ENCODE measurements at regions of chr16 and their contacts with region 1.

Region 1: DNA sequence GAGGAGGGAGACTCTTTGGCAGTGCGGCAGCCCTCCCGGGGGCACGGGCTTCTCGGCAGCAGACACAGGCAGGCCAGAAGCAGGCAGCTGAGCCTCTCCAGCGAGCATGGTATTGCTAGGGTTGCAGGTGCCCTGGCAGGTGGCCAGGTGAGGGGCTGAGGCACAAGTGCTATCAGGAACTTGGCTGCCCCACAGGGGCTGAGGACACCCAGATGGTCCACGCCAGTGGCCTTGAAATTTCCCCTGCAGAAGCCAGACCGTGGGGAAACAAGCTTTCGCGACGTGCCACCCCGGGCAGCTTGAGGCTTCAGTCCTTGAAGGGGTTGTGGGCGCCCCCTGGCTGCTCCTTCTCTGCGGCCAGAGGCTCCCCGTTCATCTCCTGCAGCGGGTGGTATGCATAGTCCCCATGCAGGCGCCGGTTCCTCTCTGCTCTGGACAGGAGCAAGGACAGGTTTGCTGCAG is 8.5 kb downstream of the NAGPA start:
- DNase-seq: peak; percentile 39 to 86
- H3K4me3 ChIP-seq: no peak overlapping the region
- H3K27ac ChIP-seq: no peak overlapping the region
- H3K4me1 ChIP-seq: peaks cover 0 to 4% (median 1%) of the 10 kb centered on the region in 4 experiments; a peak in 3 of 7 replicates
- H3K27me3 ChIP-seq: no peaks in the 10 kb centered on the region
- CTCF ChIP-seq: peak; percentile 71 to 86 (median 80)
- EP300 ChIP-seq: no peak
- POLR2A ChIP-seq: no peak
- RAD21 ChIP-seq: peak; percentile 63 to 73

Region 2: DNA sequence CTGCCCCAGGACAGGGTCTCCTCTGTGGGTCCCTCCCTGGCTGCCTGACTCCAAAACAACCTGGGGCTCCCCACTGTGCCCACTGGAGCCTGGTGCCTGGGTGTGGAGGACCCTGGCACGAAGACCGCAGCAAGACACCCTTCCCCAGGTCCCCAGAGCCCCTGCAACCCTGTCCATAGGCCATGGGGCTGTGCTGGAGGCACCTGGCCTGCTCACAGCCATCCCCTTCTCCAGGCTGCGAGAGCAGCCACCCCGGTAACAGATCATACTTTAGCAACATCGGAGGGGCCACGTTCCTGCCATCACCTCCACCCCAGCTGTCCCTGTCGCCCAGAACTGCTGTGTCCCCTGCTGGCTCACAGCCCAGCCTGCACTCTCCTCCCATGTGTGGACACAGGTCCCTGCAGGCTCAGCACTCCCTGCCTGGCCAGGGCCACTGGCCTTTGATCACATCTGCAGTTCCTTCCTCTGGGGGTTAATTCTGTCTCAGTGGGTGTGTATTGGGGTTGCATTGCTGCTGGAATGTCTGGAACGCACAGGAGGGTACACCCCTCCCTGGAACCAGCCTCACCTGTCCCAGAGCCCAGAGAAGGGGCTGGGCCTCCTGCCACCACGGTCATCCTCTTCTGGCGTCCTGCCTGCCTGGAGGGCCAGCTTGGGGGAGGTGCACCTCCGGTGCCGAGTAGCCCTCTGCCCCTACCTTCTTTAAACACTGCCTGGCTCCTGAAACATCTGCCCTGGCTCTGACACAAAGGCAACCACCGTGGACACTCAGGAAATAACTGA is 100.4 kb before region 1 on chr16:
- CTCF ChIA-PET with region 1: no interaction called
- POLR2A ChIA-PET with region 1: no interaction called
- DNase-seq: no peak
- H3K4me3 ChIP-seq: no peak overlapping the region
- H3K27ac ChIP-seq: no peak overlapping the region
- H3K4me1 ChIP-seq: peaks cover 0 to 8% (median 3%) of the 10 kb centered on the region in 4 experiments; a peak in 4 of 7 replicates
- H3K27me3 ChIP-seq: no peaks in the 10 kb centered on the region; a peak in 1 of 7 replicates
- CTCF ChIP-seq: no peak
- EP300 ChIP-seq: no peak
- POLR2A ChIP-seq: no peak
- RAD21 ChIP-seq: no peak

Region 3: GRCh38 chr16:5003211-5003610 is 22.0 kb before region 1 on chr16:
- CTCF ChIA-PET with region 1: interaction called, 10 read pairs
- POLR2A ChIA-PET with region 1: interaction called, 3 read pairs
- DNase-seq: no peak
- H3K4me3 ChIP-seq: no peak overlapping the region
- H3K27ac ChIP-seq: no peak overlapping the region
- H3K4me1 ChIP-seq: no peaks in the 10 kb centered on the region
- H3K27me3 ChIP-seq: no peaks in the 10 kb centered on the region
- CTCF ChIP-seq: no peak
- EP300 ChIP-seq: no peak
- POLR2A ChIP-seq: no peak
- RAD21 ChIP-seq: no peak

Region 4: GRCh38 chr16:5010576-5011329 is 14.4 kb before region 1 on chr16:
- CTCF ChIA-PET with region 1: interaction called, 13 read pairs
- POLR2A ChIA-PET with region 1: interaction called, 15 read pairs
- DNase-seq: no peak
- H3K4me3 ChIP-seq: no peak overlapping the region
- H3K27ac ChIP-seq: no peak overlapping the region
- H3K4me1 ChIP-seq: peaks cover 0 to 3% (median under 1%) of the 10 kb centered on the region in 4 experiments; a peak in 2 of 7 replicates
- H3K27me3 ChIP-seq: no peaks in the 10 kb centered on the region
- CTCF ChIP-seq: peak; percentile 32 to 41 (median 35)
- EP300 ChIP-seq: no peak
- POLR2A ChIP-seq: no peak
- RAD21 ChIP-seq: peak; percentile 16 to 46; a peak in 3 of 4 replicates

Region 5: GRCh38 chr16:5041600-5042133 is 16.5 kb after region 1 on chr16:
- CTCF ChIA-PET with region 1: interaction called, 27 read pairs
- POLR2A ChIA-PET with region 1: interaction called, 5 read pairs
- DNase-seq: no peak
- H3K4me3 ChIP-seq: no peak overlapping the region
- H3K27ac ChIP-seq: no peak overlapping the region
- H3K4me1 ChIP-seq: peaks cover 0 to 1% (median 1%) of the 10 kb centered on the region in 4 experiments; a peak in 6 of 7 replicates
- H3K27me3 ChIP-seq: no peaks in the 10 kb centered on the region
- CTCF ChIP-seq: no peak
- EP300 ChIP-seq: no peak
- POLR2A ChIP-seq: no peak
- RAD21 ChIP-seq: no peak